ENCODE measurements at regions of chr5 and their contacts with region 1.

Region 1: DNA sequence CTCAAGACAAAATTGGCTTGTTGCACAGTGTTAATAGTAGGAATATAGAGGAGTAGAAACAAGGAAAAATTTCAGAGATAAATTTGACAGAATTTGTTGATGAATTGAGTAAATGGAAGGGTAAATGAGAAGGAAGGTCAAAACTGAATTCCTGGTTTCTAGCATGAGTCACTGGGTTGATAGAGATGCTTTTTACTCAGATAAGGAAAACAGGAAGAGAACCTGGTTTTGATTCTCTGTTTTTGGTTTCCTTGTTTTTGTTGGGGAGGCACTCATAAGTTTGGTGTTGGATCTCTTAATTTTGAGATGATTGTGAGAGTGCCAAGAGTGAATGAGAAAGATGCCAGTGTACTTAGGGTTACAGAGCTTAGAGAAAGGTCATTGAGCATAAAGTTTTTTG is 7.1 kb downstream of the LRRC70 start:
- DNase-seq: no peak
- H3K4me3 ChIP-seq: no peak overlapping the region
- H3K27ac ChIP-seq: no peak overlapping the region
- H3K4me1 ChIP-seq: no peaks in the 10 kb centered on the region
- H3K27me3 ChIP-seq: no peaks in the 10 kb centered on the region
- CTCF ChIP-seq: no peak
- EP300 ChIP-seq: no peak
- POLR2A ChIP-seq: no peak

Region 2: DNA sequence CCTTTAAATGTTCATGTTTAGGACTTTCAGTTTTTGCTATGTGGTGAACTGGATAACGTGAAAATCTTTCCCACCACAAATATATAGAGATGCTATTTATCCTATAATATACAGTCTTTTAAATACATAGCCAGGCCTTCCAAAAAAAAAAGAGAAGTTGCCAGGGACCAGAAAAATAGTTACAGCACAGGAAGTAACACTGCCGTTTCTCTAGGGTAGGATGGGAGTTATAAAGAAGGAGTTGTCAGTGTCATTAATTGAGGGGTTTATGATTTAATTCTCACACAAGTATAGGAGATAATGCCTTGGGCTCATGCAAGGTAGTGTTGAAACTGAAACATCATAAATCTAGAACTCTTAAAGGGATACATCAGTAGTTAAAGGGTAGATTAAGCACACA is 76.8 kb after region 1 on chr5:
- in situ Hi-C with region 1: no loop called
- intact Hi-C with region 1: loop called (anchors 2 kb)
- DNase-seq: no peak
- H3K4me3 ChIP-seq: no peak overlapping the region
- H3K27ac ChIP-seq: no peak overlapping the region
- H3K4me1 ChIP-seq: no peaks in the 10 kb centered on the region
- H3K27me3 ChIP-seq: no peaks in the 10 kb centered on the region
- CTCF ChIP-seq: no peak
- EP300 ChIP-seq: no peak
- POLR2A ChIP-seq: no peak